SK-N-SH (cell line): ENCODE measurements at regions of chr5 and their contacts with region 1.

Region 1: DNA sequence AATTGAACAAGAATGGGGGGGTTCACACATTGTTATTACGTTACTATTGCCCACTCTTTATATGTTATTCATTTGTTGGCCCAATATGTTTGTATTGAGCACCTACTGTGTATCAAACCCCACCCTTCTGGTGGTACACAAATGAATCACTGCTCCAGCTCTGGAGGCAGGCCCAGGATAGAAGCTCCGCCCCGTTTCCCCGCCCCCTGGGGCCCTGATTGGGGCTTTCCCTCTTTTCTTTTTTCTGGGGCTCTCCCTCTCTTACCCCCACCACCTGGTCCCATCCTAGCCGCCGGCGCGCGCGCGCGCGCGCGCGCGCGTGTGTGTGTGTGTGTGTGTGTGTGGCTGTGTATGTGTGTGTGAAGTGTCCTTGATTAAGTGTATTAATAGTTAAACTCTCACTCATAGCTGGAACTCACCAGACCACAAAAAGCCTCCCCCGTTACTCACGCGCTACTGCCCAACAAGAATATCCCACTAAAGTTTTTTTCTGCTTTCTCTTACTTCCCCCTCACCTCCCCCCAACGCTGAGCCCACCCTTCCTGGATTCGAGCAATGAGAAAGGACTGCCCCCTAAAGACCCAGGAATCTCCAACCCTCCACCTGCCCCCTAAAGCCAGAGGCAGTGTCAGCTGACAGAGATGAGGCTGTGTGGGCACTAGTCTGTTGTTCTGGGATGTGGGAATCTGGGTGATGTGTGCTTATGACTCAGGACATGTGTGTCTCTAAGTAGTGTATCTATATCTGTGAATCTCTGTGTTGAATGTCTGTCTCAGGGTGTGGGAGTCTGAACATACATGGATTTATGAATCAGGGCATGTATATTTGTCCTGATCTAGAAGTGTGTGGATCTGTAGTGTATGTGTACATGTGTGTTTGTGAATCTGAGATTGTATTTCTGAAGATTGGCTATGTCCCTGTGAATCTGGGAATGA is 4.0 kb downstream of the CXXC5 start:
- DNase-seq: peak; percentile 89
- H3K4me3 ChIP-seq: peak overlapping the region; percentile 19 to 91; a peak in 3 of 4 replicates
- H3K27ac ChIP-seq: peak overlapping the region; percentile 78 to 96
- H3K4me1 ChIP-seq: peaks cover 54 to 66% of the 10 kb centered on the region in 2 experiments
- H3K27me3 ChIP-seq: no peaks in the 10 kb centered on the region
- CTCF ChIP-seq: no peak
- EP300 ChIP-seq: 0 out of 4 replicates have a peak, but pooled peaks of 1 of the 2 experiments have one; percentile 10
- RAD21 ChIP-seq: no peak

Region 2: GRCh38 chr5:139670369-139671095 is 18.4 kb after region 1 on chr5:
- CTCF ChIA-PET with region 1: interaction called, 18 read pairs
- POLR2A ChIA-PET with region 1: interaction called, 23 read pairs
- DNase-seq: peak; percentile 59
- H3K4me3 ChIP-seq: no peak overlapping the region
- H3K27ac ChIP-seq: peak overlapping the region; percentile 26 to 99; a peak in 3 of 4 replicates
- H3K4me1 ChIP-seq: peaks cover 56 to 92% of the 10 kb centered on the region in 2 experiments
- H3K27me3 ChIP-seq: no peaks in the 10 kb centered on the region
- CTCF ChIP-seq: peak; percentile 43
- EP300 ChIP-seq: no peak
- RAD21 ChIP-seq: peak; percentile 32; the same call in 1 of the 2 replicates